PC-3 (cell line): ENCODE measurements at regions of chr15 and their contacts with region 1.

Region 1: DNA sequence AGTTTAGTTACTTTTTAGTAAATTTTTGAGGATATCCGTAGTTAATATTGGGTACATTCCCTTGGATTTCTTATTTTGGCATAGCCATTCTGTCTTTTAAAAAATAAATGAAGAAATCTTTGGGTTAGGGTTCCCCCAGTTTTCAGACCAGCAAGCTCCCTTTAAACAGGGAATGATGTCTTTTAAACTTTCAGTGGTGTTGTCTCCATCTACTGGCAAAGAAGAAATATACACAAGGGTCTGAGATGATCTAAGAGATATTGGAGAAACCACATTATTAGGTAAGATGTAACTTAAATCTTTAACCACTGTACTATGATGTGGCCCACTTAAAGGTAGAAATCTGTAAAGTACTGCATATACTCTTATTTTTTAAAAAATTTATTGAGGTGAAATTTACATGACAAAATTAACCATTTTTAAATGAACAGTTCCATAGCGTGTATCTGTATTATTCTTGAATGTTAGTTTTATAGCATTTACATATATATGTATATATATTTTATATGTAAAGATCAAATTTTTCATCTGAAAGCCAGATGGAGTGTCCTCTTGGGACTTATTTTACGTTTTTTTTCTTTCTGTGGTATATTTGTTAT is 35.1 kb upstream of the EIF3J start:
- DNase-seq: peak; percentile 48
- ATAC-seq: peak; percentile 70
- H3K4me3 ChIP-seq: no peak overlapping the region
- H3K27ac ChIP-seq: no peak overlapping the region
- H3K4me1 ChIP-seq: no peaks in the 10 kb centered on the region
- H3K27me3 ChIP-seq: no peaks in the 10 kb centered on the region
- CTCF ChIP-seq: peak; percentile 78

Region 2: DNA sequence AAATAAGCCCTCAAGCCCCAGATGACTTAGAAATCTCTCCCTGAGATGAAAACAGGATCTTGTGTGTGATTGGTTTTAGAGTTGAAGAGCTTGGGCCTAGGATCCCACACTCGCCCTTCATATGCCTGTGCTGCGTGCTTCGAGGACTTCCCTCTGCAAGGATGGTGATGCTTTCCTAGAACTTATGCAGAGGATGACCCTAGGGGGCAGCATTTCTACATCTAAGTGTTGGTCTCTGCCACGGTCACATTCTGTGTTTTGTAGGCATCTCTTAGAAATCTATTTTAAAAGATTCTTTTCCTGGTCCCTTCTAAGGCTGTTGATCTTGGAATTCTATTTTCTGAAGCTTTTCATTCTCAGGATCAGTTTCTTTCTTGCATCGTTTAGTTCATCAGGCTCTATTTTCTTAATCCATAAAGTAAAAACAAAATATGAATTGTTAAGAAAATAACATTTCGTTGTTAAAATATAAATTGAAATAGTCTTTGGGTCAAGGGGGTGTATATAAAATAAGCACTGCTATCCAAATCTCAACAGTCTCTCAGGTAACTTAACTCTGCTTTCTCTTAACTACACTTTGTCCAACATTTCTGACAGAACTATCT is 629.3 kb before region 1 on chr15:
- CTCF ChIA-PET with region 1: no interaction called
- POLR2A ChIA-PET with region 1: no interaction called
- intact Hi-C with region 1: loop called (anchors 2 kb)
- DNase-seq: peak; percentile 73
- ATAC-seq: peak; percentile 93
- H3K4me3 ChIP-seq: no peak overlapping the region
- H3K27ac ChIP-seq: no peak overlapping the region
- H3K4me1 ChIP-seq: no peaks in the 10 kb centered on the region
- H3K27me3 ChIP-seq: no peaks in the 10 kb centered on the region
- CTCF ChIP-seq: peak; percentile 82

Region 3: DNA sequence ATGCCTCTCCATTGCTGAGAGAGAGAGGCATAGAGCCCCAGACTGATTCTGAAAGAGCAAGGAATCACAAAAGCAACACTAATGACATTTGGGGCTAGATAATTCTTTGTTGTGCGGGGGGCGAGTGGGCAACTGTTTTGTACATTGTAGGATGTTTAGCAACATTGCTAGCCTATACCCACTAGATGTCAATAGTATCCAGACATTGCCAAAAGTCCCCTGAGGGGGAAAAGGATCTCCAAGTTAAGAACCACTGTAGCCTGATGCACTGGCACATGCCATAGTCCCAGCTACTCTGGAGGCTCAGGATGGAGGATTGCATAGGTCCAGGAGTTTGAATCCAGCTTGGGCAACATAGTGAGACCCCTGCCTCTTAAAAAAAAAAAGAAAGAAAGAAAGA is 236.1 kb before region 1 on chr15:
- CTCF ChIA-PET with region 1: interaction called, 11 read pairs
- POLR2A ChIA-PET with region 1: no interaction called
- intact Hi-C with region 1: loop called (anchors 10 kb)
- DNase-seq: peak; percentile 27
- ATAC-seq: no peak; the same call in 1 of the 2 replicates
- H3K4me3 ChIP-seq: no peak overlapping the region
- H3K27ac ChIP-seq: no peak overlapping the region
- H3K4me1 ChIP-seq: no peaks in the 10 kb centered on the region
- H3K27me3 ChIP-seq: no peaks in the 10 kb centered on the region
- CTCF ChIP-seq: 0 out of 2 replicates have a peak, but pooled peaks have one; percentile 18

Region 4: DNA sequence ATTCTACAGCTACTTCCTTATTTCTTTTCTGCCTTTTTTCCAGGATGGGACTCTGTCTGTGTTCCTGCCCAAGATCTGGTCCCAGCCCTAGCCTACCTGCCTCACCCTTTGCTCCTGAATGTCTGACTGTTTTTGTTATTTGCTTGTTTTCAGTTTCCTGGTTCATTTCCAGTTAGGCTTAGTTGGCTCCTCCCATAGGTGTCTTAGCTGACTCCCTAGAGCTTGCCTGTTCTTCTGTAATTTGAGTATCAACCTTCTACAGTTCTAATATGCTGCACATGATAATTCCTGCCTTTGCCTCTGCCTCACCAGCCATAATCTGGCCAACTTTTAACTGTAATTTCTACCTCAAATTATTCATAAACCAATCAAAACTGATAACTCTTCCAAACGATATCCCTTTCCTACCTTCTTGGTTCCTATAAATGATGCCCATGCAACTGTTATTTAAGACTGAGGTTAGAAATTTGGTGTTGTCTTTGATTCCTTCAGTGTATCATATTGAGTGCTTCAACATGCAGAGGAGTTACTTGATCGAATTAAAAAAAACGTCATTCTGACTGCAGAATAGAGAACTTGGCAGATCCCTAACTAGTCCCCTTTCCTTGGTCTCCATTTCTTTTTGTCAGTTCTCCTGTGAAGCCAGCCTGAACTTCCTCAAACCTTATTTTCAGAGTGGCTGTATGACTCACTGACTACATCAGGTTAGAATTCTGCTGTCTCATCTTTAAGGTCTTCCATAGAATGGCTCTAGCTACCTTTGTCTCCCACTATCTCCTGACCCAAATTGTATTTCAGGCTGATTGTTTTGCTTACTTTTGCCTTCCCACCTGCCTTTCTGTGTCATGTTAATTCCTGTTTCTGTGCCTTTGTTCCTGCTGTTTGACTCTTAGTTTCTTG is 205.0 kb before region 1 on chr15:
- CTCF ChIA-PET with region 1: no interaction called
- POLR2A ChIA-PET with region 1: interaction called, 10 read pairs
- intact Hi-C with region 1: no loop called
- DNase-seq: peak; percentile 81
- ATAC-seq: peak; percentile 95
- H3K4me3 ChIP-seq: peak overlapping the region; percentile 37; the same call in 1 of the 2 replicates
- H3K27ac ChIP-seq: peak overlapping the region; percentile 88
- H3K4me1 ChIP-seq: peaks cover 23% of the 10 kb centered on the region
- H3K27me3 ChIP-seq: no peaks in the 10 kb centered on the region
- CTCF ChIP-seq: no peak

Region 5: GRCh38 chr15:44308415-44308814 is 193.5 kb before region 1 on chr15:
- CTCF ChIA-PET with region 1: no interaction called
- POLR2A ChIA-PET with region 1: no interaction called
- intact Hi-C with region 1: no loop called
- DNase-seq: no peak
- ATAC-seq: no peak
- H3K4me3 ChIP-seq: no peak overlapping the region
- H3K27ac ChIP-seq: no peak overlapping the region
- H3K4me1 ChIP-seq: 0 out of 2 replicates have a peak, but pooled peaks cover 15% of the 10 kb centered on the region
- H3K27me3 ChIP-seq: no peaks in the 10 kb centered on the region
- CTCF ChIP-seq: no peak

Region 6: GRCh38 chr15:44458429-44458828 is 43.4 kb before region 1 on chr15:
- CTCF ChIA-PET with region 1: no interaction called
- POLR2A ChIA-PET with region 1: no interaction called
- intact Hi-C with region 1: no loop called
- DNase-seq: peak; percentile 6
- ATAC-seq: no peak; the same call in 1 of the 2 replicates
- H3K4me3 ChIP-seq: no peak overlapping the region
- H3K27ac ChIP-seq: no peak overlapping the region
- H3K4me1 ChIP-seq: no peaks in the 10 kb centered on the region
- H3K27me3 ChIP-seq: no peaks in the 10 kb centered on the region
- CTCF ChIP-seq: no peak

Region 7: GRCh38 chr15:44482088-44482487 is 19.8 kb before region 1 on chr15:
- CTCF ChIA-PET with region 1: interaction called, 16 read pairs
- POLR2A ChIA-PET with region 1: no interaction called
- intact Hi-C with region 1: no loop called
- DNase-seq: no peak
- ATAC-seq: no peak
- H3K4me3 ChIP-seq: no peak overlapping the region
- H3K27ac ChIP-seq: no peak overlapping the region
- H3K4me1 ChIP-seq: no peaks in the 10 kb centered on the region
- H3K27me3 ChIP-seq: no peaks in the 10 kb centered on the region
- CTCF ChIP-seq: no peak

Region 8: DNA sequence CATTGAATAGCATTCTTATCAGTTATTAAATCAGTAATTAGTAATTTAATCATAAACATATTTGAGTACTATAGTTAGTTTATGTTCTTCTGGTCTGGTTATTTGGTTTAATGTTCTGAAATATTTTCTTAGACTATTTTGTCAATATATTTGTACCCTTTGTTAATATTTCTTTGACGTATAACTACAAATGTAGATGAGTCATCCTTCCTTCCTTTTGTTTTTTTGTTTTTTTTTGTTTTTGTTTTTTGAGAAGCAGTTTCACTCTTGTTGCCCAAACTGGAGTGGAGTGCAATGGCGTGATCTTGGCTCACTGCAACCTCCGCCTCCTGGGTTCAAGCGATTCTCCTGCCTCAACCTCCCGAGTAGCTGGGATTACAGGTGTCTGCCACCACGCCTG is 17.7 kb after region 1 on chr15:
- CTCF ChIA-PET with region 1: no interaction called
- POLR2A ChIA-PET with region 1: no interaction called
- intact Hi-C with region 1: no loop called
- DNase-seq: no peak
- ATAC-seq: no peak
- H3K4me3 ChIP-seq: no peak overlapping the region
- H3K27ac ChIP-seq: no peak overlapping the region
- H3K4me1 ChIP-seq: no peaks in the 10 kb centered on the region
- H3K27me3 ChIP-seq: no peaks in the 10 kb centered on the region
- CTCF ChIP-seq: no peak

Region 9: GRCh38 chr15:44545913-44546802 is 44.3 kb after region 1 on chr15:
- CTCF ChIA-PET with region 1: no interaction called
- POLR2A ChIA-PET with region 1: interaction called, 15 read pairs
- intact Hi-C with region 1: no loop called
- DNase-seq: peak; percentile 43
- ATAC-seq: peak; percentile 44
- H3K4me3 ChIP-seq: no peak overlapping the region
- H3K27ac ChIP-seq: no peak overlapping the region
- H3K4me1 ChIP-seq: peaks cover 22% of the 10 kb centered on the region
- H3K27me3 ChIP-seq: no peaks in the 10 kb centered on the region
- CTCF ChIP-seq: peak; percentile 69